PC-3 (cell line): ENCODE measurements at regions of chr13 and their contacts with region 1.

Region 1: GRCh38 chr13:113816946-113817859 is 46.7 kb downstream of the GAS6 start:
- DNase-seq: peak; percentile 81
- ATAC-seq: peak; percentile 12
- H3K4me3 ChIP-seq: peak overlapping the region; percentile 74; the same call in 1 of the 2 replicates
- H3K27ac ChIP-seq: no peak overlapping the region
- H3K4me1 ChIP-seq: peaks cover 31% of the 10 kb centered on the region
- H3K27me3 ChIP-seq: no peaks in the 10 kb centered on the region
- CTCF ChIP-seq: peak; percentile 66

Region 2: GRCh38 chr13:113785051-113786010 is 31.9 kb before region 1 on chr13:
- CTCF ChIA-PET with region 1: no interaction called
- POLR2A ChIA-PET with region 1: no interaction called
- intact Hi-C with region 1: loop called (anchors 5 kb)
- DNase-seq: peak; percentile 97
- ATAC-seq: peak; percentile 92
- H3K4me3 ChIP-seq: peak overlapping the region; percentile 31; the same call in 1 of the 2 replicates
- H3K27ac ChIP-seq: peak overlapping the region; percentile 99
- H3K4me1 ChIP-seq: peaks cover 35% of the 10 kb centered on the region
- H3K27me3 ChIP-seq: no peaks in the 10 kb centered on the region
- CTCF ChIP-seq: no peak

Region 3: DNA sequence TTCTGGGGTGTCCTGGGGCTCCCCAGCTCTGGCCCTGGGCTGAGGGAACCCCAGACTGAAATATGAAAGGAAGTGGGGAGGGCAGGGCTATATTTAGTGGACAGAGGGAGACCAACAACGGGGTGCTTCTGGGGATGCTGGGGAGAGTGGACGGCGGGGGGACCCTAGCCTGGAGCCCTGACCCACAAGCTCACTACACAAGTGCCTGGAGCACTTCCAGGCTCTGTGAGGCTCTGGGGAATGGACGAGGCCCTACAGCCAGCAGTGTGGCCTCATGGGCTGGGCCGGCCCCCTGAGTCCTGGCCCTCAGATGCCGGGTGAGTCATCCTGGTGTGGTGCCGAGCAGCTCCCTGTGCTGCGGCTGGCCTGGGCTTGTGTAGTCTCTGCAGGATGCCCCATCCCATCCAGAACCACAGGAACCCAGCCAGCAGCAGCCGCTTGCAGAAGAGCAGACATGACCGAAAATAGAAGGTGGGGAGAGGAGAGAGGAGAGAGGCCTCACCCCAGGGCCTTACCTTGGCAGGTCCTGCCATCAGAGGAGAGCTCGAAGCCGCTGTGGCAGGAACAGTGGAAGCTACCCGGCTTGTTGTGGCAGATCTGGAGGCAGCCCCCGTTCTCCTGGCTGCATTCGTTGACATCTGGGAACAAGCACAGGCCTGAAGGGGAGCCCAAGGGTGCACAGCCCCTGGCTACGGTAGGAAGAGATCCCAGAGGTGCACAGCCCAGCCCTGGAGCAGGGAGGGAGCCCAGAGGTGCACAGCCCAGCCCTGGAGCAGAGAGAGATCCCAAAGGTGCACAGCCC is 20.6 kb after region 1 on chr13:
- CTCF ChIA-PET with region 1: no interaction called
- POLR2A ChIA-PET with region 1: no interaction called
- intact Hi-C with region 1: loop called (anchors 2 kb)
- DNase-seq: peak; percentile 84
- ATAC-seq: peak; percentile 92
- H3K4me3 ChIP-seq: peak overlapping the region; percentile 48
- H3K27ac ChIP-seq: peak overlapping the region; percentile 83
- H3K4me1 ChIP-seq: peaks cover 23% of the 10 kb centered on the region
- H3K27me3 ChIP-seq: no peaks in the 10 kb centered on the region
- CTCF ChIP-seq: no peak

Region 4: DNA sequence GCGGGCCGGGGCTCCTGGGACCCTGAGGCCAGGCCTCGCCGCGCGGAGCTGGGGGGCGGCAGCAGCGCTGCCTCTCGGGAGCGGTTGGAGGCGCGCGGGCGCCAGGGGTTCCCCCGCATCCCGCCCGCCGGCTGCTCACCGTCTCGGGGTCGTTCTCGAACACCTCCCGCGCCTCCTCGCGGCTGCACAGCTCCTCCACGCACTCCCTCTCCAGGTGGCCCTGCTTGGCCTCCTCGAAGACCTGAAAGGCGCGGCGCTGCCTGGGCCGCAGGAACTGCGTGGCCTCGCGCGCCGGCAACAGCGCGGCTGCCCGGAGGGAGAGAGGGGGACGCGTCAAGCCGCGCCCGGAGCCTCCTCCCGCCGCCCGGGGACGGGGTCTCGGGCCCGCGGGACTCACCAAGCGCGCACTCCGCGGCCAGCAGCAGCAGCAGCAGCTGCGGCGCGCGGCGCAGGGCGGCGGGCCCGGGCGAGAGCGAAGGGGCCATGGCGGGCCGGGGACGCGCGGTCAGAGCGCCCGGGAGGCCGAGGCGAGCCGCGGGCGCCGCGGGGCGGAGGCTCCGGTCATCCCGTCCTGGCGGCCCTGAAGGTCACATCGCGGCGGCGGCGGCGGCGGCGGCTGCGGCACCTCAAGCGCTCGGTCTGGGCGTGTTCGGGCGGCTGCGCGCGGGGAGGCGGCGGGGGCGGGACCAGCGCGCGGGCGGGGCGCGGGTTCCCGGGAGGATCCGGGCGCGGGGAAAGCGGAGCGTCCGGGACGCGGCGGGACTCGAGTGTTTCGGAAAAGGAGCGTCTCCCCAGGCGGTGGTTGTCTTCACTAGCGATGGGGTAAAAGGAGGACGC is 46.5 kb after region 1 on chr13 and contains the start of gene GAS6:
- CTCF ChIA-PET with region 1: no interaction called
- POLR2A ChIA-PET with region 1: no interaction called
- intact Hi-C with region 1: loop called (anchors 5 kb)
- DNase-seq: peak; percentile 39
- ATAC-seq: peak; percentile 70
- H3K4me3 ChIP-seq: peak within 1 kb of the TSS; percentile 98
- H3K27ac ChIP-seq: no peak within 1 kb of the TSS
- H3K4me1 ChIP-seq: peaks cover 4% of the 10 kb centered on the region; the same call in 1 of the 2 replicates
- H3K27me3 ChIP-seq: no peaks in the 10 kb centered on the region
- CTCF ChIP-seq: no peak
- total RNA-seq, gene GAS6: 20.9 and 33.7 TPM in 2 replicates

Region 5: GRCh38 chr13:113938716-113939115 is 121.5 kb after region 1 on chr13:
- CTCF ChIA-PET with region 1: no interaction called
- POLR2A ChIA-PET with region 1: no interaction called
- intact Hi-C with region 1: no loop called
- DNase-seq: no peak
- ATAC-seq: no peak
- H3K4me3 ChIP-seq: no peak overlapping the region
- H3K27ac ChIP-seq: no peak overlapping the region
- H3K4me1 ChIP-seq: no peaks in the 10 kb centered on the region
- H3K27me3 ChIP-seq: no peaks in the 10 kb centered on the region
- CTCF ChIP-seq: no peak

Region 6: GRCh38 chr13:113951246-113951999 is 134.2 kb after region 1 on chr13:
- CTCF ChIA-PET with region 1: interaction called, 5 read pairs
- POLR2A ChIA-PET with region 1: no interaction called
- intact Hi-C with region 1: loop called (anchors 1 kb)
- DNase-seq: peak; percentile 85
- ATAC-seq: peak; percentile 96
- H3K4me3 ChIP-seq: no peak overlapping the region
- H3K27ac ChIP-seq: no peak overlapping the region
- H3K4me1 ChIP-seq: no peaks in the 10 kb centered on the region
- H3K27me3 ChIP-seq: no peaks in the 10 kb centered on the region
- CTCF ChIP-seq: peak; percentile 81

Region 7: DNA sequence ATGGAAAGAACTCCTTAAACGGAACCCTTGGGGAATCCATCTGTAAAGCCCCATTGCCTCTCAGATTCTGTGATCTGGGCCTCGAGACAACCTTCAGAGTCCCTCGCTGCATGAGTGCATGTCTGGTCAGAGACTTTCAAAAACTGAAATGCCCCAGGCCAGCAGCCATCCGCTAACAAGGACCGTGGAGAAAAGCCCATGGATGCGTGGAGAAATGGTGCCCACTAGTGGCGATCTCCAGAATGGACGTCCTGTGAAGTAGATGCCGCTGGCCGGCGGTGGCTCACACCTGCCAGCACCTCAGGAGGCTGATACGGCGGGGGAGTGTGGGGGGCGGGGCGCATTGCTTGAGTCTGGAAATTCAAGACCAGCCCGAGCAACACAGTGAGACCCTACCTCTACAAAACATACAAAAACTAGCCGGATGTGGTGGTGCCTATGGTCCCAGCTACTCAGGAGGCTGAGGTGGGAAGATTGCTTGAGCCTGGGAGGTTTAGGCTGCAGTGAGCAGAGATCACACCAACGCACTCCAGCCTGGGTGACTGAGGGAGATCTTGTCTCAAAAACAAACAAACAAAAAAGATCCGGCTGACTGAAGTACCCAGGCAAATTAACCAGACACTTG is 409.6 kb after region 1 on chr13:
- CTCF ChIA-PET with region 1: no interaction called
- POLR2A ChIA-PET with region 1: no interaction called
- intact Hi-C with region 1: loop called (anchors 5 kb)
- DNase-seq: peak; percentile 87
- ATAC-seq: peak; percentile 97
- H3K4me3 ChIP-seq: no peak overlapping the region
- H3K27ac ChIP-seq: no peak overlapping the region
- H3K4me1 ChIP-seq: no peaks in the 10 kb centered on the region
- H3K27me3 ChIP-seq: no peaks in the 10 kb centered on the region
- CTCF ChIP-seq: peak; percentile 80